Dendritic cell treated with granulocyte-macrophage colony-stimulating factor and Interleukin-4, amounts not matched to agents 40 ng/mL and 50 ng/mL, for 4 days (primary cell): ENCODE measurements at regions of chr1 and their contacts with region 1.

Region 1: DNA sequence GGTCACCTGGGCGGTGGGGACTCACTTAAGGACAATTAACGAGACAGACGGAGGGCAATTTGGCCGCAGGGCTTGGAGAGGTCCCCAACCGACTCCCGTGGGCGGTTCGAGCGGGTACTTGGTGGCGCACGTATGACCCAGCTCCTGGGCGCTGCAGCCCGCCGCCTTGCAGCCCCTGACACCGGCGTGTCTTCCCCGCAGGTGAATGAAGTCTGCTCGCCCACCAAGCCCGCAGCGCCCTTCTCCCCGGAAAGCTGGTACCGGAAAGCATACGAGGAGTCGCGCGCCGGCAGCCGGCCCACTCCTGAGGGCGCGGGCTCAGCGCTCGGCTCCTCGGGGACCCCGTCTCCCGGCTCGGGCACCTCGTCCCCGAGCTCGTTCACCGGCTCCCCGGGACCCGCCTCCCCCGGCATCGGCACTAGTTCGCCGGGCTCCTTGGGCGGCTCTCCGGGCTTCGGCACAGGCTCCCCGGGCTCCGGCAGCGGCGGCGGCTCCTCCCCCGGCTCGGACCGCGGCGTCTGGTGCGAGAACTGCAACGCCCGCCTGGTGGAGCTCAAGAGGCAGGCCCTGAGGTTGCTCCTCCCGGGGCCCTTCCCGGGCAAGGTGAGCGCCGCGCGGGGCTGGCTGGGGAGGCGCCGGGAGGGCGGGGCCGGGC is 1.4 kb downstream of the KIF26B start:
- H3K4me3 Mint-ChIP-seq: peak overlapping the region; percentile 71
- H3K27ac Mint-ChIP-seq: peak overlapping the region; percentile 47
- H3K4me1 Mint-ChIP-seq: peaks cover 34% of the 10 kb centered on the region
- H3K27me3 Mint-ChIP-seq: peaks cover 84% of the 10 kb centered on the region

Region 2: GRCh38 chr1:245188403-245188802 is 32.2 kb after region 1 on chr1:
- intact Hi-C with region 1: loop called (anchors 1 kb)
- H3K4me3 Mint-ChIP-seq: peak overlapping the region; percentile 34
- H3K27ac Mint-ChIP-seq: peak overlapping the region; percentile 84
- H3K4me1 Mint-ChIP-seq: peaks cover 27% of the 10 kb centered on the region
- H3K27me3 Mint-ChIP-seq: peaks cover 13% of the 10 kb centered on the region

Region 3: GRCh38 chr1:245290836-245291235 is 134.6 kb after region 1 on chr1:
- intact Hi-C with region 1: no loop called
- H3K4me3 Mint-ChIP-seq: no peak overlapping the region
- H3K27ac Mint-ChIP-seq: no peak overlapping the region
- H3K4me1 Mint-ChIP-seq: peaks cover 12% of the 10 kb centered on the region
- H3K27me3 Mint-ChIP-seq: peaks cover 87% of the 10 kb centered on the region

Region 4: DNA sequence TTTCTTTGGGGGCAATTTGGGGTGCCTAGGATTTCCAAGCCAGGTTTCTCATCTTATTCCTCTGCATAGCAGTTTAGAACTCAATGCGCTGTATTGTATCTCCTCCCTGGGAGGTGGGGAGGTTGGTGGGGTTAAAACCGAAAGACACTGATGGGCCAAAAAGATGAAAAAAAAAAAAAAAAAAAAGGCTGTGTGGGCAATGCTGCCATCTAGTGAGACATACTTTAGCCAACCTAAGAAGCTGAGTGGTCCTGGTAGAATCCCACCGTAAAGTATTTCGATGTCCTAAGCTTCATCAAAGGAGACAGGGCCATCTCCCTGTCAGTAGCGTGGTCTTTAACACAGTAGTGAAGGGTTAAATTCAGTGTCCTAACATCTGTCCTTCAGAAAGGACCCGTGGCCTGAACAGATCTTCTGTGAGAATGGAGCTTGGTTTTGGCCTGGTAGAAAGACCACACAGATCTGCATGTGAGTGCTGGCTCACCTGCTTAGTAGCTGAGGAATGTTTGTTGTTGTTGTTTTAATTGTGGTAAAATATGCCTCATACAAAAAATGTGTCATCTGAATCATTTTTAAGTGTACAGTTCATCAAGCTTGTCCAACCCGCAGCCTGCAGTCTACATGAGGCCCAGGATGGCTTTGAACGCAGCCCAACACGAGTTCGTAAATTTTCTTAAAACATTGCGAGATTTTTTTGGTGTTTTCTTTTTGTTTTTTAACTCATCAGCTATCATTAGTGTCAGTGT is 224.8 kb after region 1 on chr1:
- intact Hi-C with region 1: loop called (anchors 5 kb)
- H3K4me3 Mint-ChIP-seq: no peak overlapping the region
- H3K27ac Mint-ChIP-seq: no peak overlapping the region
- H3K4me1 Mint-ChIP-seq: no peaks in the 10 kb centered on the region
- H3K27me3 Mint-ChIP-seq: peaks cover 22% of the 10 kb centered on the region

Region 5: GRCh38 chr1:246002725-246003441 is 846.7 kb after region 1 on chr1:
- intact Hi-C with region 1: loop called (anchors 1 kb)
- H3K4me3 Mint-ChIP-seq: no peak overlapping the region
- H3K27ac Mint-ChIP-seq: no peak overlapping the region
- H3K4me1 Mint-ChIP-seq: no peaks in the 10 kb centered on the region
- H3K27me3 Mint-ChIP-seq: no peaks in the 10 kb centered on the region

Region 6: DNA sequence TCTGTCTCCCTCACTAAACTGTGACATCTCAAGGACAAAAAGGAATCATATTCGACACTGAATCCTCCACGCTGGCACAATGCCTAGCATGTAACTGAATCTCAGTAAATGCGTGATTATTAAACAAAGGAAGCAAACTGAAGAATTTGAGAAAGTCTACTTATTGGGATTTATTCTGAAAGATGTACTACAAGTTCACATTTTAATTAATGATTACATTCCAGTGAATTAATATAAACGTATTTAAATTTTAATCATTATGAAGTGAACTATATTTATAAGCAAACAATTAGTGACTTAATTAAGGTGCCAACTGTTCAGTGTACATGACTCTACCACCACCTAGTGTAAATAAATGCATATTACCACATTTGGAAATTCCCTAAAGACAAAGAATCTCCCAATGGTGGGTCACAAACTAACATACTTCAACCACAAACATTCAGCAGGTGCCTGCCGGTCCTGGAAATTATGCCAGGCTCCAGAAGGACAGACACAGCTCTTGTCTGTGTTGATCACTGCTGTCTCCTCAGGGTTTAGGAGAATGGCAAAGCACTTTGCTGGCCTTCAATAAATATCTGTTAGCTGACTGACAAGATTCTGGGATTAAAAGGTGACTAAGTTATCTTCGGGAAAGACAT is 1294.5 kb after region 1 on chr1:
- intact Hi-C with region 1: loop called (anchors 5 kb)
- H3K4me3 Mint-ChIP-seq: no peak overlapping the region
- H3K27ac Mint-ChIP-seq: no peak overlapping the region
- H3K4me1 Mint-ChIP-seq: peaks cover 6% of the 10 kb centered on the region
- H3K27me3 Mint-ChIP-seq: no peaks in the 10 kb centered on the region